ENCODE measurements at regions of chr13 and their contacts with region 1.

Region 1: DNA sequence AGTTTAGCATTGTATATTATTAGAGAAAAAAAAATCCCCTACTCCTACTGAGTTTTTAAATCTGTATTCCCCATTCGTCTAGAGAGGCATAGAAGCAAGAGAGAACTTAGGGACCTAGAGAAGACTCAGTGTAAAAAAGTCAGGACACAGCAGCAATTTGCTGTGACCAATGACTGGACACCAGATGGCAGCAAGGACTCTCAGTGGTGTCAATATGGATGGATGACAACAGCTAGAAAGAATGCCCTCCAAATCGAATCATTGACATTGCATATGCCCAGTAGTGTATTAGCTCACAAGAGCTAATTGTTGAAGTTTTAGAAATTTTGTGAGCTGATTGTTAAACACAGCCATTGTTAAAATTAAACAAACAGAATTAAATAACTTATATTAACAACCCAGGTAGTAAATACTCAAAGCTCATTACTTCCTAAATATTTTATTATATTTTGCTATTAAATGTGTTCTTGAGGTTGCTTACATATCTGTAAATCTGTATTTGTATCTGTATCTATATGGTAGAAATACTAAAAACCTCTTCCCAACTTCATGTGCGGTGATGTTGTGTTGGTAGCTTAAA is 43.9 kb downstream of the SIAH3 start:
- DNase-seq: peak in 3 of 5 donors; percentile 27 to 53 (median 47)
- ATAC-seq: peak; percentile 53 to 81 (median 68)
- H3K4me3 ChIP-seq: no peak overlapping the region
- H3K27ac ChIP-seq: no peak overlapping the region
- H3K4me1 ChIP-seq: peaks cover 0 to 5% (median 0%) of the 10 kb centered on the region in 12 donors
- H3K27me3 ChIP-seq: no peaks in the 10 kb centered on the region
- CTCF ChIP-seq: peak; percentile 40 to 71 (median 56)
- POLR2A ChIP-seq: no peak

Region 2: GRCh38 chr13:44439452-44440024 is 1368.1 kb before region 1 on chr13:
- intact Hi-C with region 1: no loop called
- DNase-seq: no peak
- ATAC-seq: no peak
- H3K4me3 ChIP-seq: no peak overlapping the region
- H3K27ac ChIP-seq: no peak overlapping the region
- H3K4me1 ChIP-seq: peaks cover 0 to 36% (median 10%) of the 10 kb centered on the region in 12 donors
- H3K27me3 ChIP-seq: no peaks in the 10 kb centered on the region
- CTCF ChIP-seq: no peak
- POLR2A ChIP-seq: no peak

Region 3: DNA sequence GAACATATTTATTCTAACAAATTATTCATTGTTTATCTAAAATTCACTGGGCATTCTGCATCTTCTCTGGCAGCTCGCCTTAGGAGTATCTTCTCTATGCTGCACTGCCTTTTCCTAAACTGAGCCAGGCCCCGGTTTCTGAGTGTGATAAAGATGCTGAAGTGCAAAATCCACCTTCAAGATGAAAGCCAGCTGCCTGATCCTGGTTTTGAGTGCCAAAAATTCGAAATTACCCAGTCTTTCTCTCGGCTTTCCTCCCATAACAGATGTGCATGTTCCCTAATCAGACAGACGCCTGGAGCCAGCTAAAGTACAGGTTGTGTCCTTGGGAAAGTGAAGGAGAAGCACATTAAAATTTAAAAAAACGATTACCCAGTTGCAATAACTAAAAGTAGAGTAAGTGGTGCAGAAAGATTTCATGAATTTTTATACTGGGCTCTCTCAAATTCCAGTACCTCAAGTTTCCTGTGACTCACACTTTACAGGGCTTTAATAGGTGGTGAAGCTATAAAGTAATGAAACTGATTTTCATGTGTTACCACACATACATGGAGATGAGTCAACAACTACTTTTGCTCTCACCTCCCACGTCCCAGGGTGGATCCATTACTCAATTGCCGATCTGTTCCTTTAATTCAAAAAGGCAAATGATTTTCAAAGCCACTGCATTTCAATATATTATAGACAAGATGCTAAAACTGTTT is 752.3 kb before region 1 on chr13:
- intact Hi-C with region 1: no loop called
- DNase-seq: no peak
- ATAC-seq: peak in 1 of 4 donors; percentile 85
- H3K4me3 ChIP-seq: no peak overlapping the region
- H3K27ac ChIP-seq: peak overlapping the region in 7 of 12 donors; percentile 29 to 69 (median 38)
- H3K4me1 ChIP-seq: peaks cover 0 to 16% (median 2%) of the 10 kb centered on the region in 12 donors
- H3K27me3 ChIP-seq: no peaks in the 10 kb centered on the region
- CTCF ChIP-seq: no peak
- POLR2A ChIP-seq: no peak

Region 4: DNA sequence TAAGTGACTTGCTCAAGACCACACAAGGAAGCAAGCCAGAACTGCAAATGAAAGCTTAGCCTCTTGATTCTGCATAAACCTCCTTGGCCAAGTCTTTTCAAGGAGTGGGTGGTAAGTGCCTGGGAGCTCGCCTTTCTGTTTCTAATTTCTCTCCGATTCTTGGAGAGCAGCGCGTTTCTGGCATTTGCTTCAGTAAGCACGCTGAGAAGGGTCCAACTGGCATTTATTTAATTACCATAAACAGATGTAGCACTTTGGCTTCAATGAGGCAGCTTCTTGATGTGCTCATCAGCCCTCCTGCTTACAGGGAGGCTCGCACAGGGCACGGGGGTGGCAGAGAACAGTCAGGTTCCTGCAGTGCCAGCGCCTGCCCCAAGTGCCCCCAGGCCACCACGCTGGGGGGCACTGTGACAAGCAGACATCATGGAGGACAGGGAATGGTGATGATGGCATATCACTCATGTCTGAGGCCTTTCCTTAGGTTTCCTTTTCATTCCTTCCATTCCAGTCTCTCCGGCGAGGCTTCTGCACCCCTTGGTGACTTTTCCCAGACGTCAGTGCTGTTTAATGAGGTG is 30.6 kb after region 1 on chr13:
- intact Hi-C with region 1: no loop called
- DNase-seq: no peak
- ATAC-seq: no peak
- H3K4me3 ChIP-seq: no peak overlapping the region
- H3K27ac ChIP-seq: no peak overlapping the region
- H3K4me1 ChIP-seq: peaks cover 0 to 11% (median 0%) of the 10 kb centered on the region in 12 donors
- H3K27me3 ChIP-seq: no peaks in the 10 kb centered on the region
- CTCF ChIP-seq: no peak
- POLR2A ChIP-seq: no peak

Region 5: GRCh38 chr13:45879670-45880069 is 72.1 kb after region 1 on chr13:
- intact Hi-C with region 1: loop called in 3 of 10 experiments (anchors 1 to 5 kb)
- DNase-seq: peak in 4 of 5 donors; percentile 43 to 82 (median 59)
- ATAC-seq: peak; percentile 80 to 98 (median 93)
- H3K4me3 ChIP-seq: no peak overlapping the region
- H3K27ac ChIP-seq: peak overlapping the region in 1 of 12 donors; percentile 30
- H3K4me1 ChIP-seq: peaks cover 0 to 6% (median 0%) of the 10 kb centered on the region in 12 donors
- H3K27me3 ChIP-seq: peaks cover 0 to 2% (median 0%) of the 10 kb centered on the region in 9 donors
- CTCF ChIP-seq: peak in 11 of 12 donors; percentile 6 to 52 (median 39)
- POLR2A ChIP-seq: no peak

Region 6: DNA sequence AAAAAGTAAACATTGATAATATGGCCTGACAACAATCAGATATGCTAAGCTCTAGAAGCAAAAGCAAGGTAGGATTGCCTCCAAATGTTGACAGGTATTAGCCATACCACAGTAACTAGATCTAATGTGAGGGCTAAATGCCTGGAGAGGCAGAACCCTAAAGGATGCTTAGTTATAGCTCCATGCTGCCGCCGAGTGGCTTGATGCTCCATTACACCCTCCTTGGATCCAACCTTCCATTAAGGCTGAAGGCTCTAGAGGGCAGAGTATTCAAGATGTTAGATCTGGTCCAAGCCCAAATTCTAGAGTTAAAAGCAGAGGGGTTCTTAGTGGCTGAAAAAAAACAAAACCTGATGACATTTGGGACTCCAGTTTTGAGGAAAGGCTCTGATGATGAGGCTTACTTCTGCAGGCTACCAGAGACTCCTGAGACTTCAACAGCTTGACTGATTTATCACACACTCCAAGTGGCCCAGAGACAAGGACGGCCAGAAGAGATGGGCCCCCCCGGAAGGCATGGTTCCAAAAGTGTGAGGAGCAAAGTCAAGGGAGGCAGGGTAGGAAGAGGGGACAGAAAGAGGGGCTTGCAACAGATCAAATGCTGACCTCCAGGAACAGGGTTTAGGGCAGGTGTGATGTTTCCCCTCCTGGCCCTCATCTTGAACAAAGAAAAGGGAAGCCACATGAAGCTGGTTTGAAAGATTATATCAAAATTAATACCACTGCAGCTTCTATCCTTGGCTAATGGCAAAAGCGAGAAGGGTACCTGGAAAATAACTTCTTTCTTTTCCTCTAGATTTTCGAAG is 319.1 kb after region 1 on chr13:
- intact Hi-C with region 1: loop called in 8 of 10 experiments (anchors 2 to 10 kb)
- DNase-seq: peak; percentile 45 to 68 (median 52)
- ATAC-seq: peak in 3 of 4 donors; percentile 87 to 90 (median 89)
- H3K4me3 ChIP-seq: no peak overlapping the region
- H3K27ac ChIP-seq: no peak overlapping the region
- H3K4me1 ChIP-seq: peaks cover 0 to 24% (median 0%) of the 10 kb centered on the region in 12 donors
- H3K27me3 ChIP-seq: peaks cover 0 to 34% (median 0%) of the 10 kb centered on the region in 9 donors
- CTCF ChIP-seq: peak; percentile 43 to 74 (median 62)
- POLR2A ChIP-seq: no peak

Region 7: GRCh38 chr13:46160471-46161066 is 353.0 kb after region 1 on chr13:
- intact Hi-C with region 1: loop called in 1 of 10 experiments (anchors 5 kb)
- DNase-seq: no peak
- ATAC-seq: peak in 3 of 4 donors; percentile 48 to 64 (median 55)
- H3K4me3 ChIP-seq: no peak overlapping the region
- H3K27ac ChIP-seq: peak overlapping the region in 1 of 12 donors; percentile 64
- H3K4me1 ChIP-seq: peaks cover 0 to 46% (median 0%) of the 10 kb centered on the region in 12 donors
- H3K27me3 ChIP-seq: peaks cover 0 to 15% (median 0%) of the 10 kb centered on the region in 9 donors
- CTCF ChIP-seq: peak; percentile 61 to 87 (median 72)
- POLR2A ChIP-seq: no peak

Measured in heart left ventricle (tissue), 16 donors.